ENCODE measurements at regions of chr7 and their contacts with region 1.

Region 1: DNA sequence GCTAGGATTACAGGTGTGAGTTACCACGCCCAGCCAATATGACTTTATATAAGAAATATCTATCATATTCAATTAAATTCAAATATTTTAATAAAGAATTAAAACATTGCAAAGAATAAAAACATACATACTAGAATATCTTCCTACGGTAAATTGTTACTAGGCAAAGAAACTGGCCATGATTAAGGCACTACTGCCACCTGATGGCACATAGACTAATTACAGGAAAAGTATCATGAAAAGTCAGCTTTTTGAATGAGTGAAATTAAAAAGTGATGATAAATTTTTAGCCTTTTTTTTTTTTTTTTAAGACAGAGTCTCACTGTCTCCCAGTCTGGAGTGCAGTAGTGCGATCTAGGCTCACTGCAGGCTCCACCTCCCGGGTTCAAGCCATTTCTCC is 30.9 kb downstream of the MRPS33 start:
- DNase-seq: peak; percentile 22
- H3K4me3 ChIP-seq: no peak overlapping the region
- H3K27ac ChIP-seq: no peak overlapping the region
- H3K4me1 ChIP-seq: no peaks in the 10 kb centered on the region
- H3K27me3 ChIP-seq: no peaks in the 10 kb centered on the region
- CTCF ChIP-seq: no peak

Region 2: DNA sequence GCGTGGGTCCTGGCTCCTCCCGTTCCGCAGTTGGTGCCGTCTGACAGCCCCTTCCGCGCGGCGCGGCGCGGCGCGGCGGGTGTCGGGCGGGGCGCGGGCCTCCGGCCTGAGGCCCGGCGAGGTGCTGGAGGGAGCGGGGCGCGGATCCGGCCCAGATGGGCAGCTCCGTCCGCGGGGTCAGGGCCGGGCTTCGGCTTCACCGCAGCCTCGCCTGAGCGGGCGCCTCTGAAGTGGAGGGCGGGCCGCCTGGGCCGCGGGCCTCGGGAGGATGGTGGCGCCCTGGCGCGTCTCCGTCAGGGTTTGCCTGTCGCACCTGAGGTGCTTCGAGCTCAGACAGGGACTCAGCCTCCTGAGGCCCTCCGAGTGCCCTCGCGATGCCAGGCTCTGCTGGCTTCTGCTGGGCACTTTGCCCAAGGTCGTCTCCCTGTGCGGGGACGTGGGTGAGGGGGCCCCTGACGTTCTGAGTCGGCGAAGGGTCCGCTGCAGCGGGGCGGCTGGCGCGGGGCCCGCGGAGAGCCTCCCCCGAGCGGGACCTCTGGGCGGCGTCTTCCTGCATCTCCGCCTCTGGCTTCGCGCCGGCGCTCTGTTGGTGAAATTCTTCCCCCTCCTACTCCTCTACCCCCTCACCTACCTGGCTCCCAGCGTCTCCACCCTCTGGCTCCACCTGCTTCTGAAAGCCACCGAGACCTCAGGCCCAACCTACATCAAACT is 310.6 kb before region 1 on chr7:
- intact Hi-C with region 1: loop called (anchors 10 kb)
- DNase-seq: peak; percentile 85
- H3K4me3 ChIP-seq: peak overlapping the region; percentile 68
- H3K27ac ChIP-seq: peak overlapping the region; percentile 89
- H3K4me1 ChIP-seq: peaks cover 20% of the 10 kb centered on the region
- H3K27me3 ChIP-seq: no peaks in the 10 kb centered on the region
- CTCF ChIP-seq: no peak

Region 3: DNA sequence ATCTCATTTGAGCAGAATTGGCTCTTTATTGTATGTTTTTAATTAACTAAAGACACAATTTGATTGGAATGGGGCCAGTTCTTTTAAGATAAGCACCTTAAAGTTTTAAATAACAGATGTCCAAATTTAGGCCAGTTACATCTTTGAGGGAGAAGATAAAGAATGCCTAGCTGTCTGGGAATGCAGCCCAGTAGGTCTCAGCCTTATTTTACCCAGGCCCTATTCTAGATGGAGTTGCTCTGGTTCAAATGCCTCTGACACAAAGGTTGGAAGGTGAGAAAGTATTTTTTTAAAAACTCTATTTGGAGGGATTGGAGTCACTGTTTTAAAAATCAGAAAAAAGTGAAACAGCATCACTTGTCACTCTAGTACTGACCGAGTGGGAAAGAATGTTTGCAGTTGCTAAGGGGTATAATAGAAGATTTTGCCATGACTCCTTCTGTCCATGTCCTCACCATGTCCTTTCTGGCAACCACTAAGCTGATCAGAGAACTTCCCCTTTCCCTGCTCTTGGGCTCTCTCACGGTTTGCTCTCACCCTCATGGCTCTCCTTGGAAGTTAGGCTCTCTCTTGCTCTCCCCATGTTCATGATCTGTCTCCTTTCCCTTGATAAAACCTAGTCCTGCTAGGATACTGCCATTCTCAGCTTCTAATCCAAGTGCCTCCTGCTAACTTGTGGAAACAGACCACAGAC is 329.2 kb after region 1 on chr7:
- intact Hi-C with region 1: no loop called
- DNase-seq: no peak
- H3K4me3 ChIP-seq: no peak overlapping the region
- H3K27ac ChIP-seq: no peak overlapping the region
- H3K4me1 ChIP-seq: no peaks in the 10 kb centered on the region
- H3K27me3 ChIP-seq: no peaks in the 10 kb centered on the region
- CTCF ChIP-seq: no peak